Psoas muscle (tissue), 8 donors: ENCODE measurements at regions of chr1 and their contacts with region 1.

Region 1: DNA sequence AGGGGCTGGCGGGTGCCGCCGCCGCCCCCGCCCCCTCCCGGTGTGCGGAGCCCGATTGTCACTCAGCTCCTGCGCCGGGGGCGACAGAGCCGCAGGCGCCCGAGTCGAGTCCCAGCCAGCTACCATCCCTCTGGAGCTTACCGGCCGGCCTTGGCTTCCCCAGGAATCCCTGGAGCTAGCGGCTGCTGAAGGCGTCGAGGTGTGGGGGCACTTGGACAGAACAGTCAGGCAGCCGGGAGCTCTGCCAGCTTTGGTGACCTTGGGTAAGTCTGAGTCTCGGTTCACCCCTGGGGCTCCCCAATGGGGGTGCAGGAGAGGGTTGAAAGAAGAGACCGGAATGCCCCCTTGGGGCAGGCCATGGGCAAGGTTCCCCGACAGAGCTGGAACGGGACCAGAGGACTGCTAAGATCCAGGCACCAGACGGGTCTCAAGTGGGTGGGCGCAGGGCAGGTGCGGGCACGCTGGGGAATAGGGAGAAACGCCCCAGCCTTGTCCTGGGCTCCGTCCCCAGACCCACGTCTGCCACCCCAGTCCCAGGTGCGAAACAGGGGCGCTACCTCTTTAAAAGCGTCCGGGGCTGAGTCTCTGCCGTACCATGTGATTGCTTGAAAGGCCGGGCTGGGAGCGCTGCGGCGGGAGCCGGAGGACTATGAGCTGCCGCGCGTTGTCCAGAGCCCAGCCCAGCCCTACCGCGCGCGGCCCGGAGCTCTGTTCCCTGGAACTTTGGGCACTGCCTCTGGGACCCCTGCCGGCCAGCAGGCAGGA is at the start of gene ADORA1:
- DNase-seq: peak; percentile 64 to 76
- ATAC-seq: peak; percentile 82 to 96 (median 90)
- H3K4me3 ChIP-seq: peak within 1 kb of the TSS; percentile 73
- H3K27ac ChIP-seq: peak within 1 kb of the TSS; percentile 64
- H3K4me1 ChIP-seq: peaks cover 42% of the 10 kb centered on the region
- H3K27me3 ChIP-seq: peaks cover 0 to 8% (median 2%) of the 10 kb centered on the region in 3 donors
- CTCF ChIP-seq: no peak
- total RNA-seq, gene ADORA1: 1.2 to 10.4 (median 6.1) TPM

Region 2: GRCh38 chr1:203084588-203085502 is 43.0 kb before region 1 on chr1:
- intact Hi-C with region 1: loop called in 1 of 2 experiments (anchors 5 kb)
- DNase-seq: peak; percentile 68 to 87
- ATAC-seq: peak; percentile 58 to 79 (median 70)
- H3K4me3 ChIP-seq: peak overlapping the region; percentile 99
- H3K27ac ChIP-seq: peak overlapping the region; percentile 97
- H3K4me1 ChIP-seq: peaks cover 27% of the 10 kb centered on the region
- H3K27me3 ChIP-seq: no peaks in the 10 kb centered on the region
- CTCF ChIP-seq: peak; percentile 79